IMR-90 (cell line): ENCODE measurements at regions of chr16 and their contacts with region 1.

Region 1: DNA sequence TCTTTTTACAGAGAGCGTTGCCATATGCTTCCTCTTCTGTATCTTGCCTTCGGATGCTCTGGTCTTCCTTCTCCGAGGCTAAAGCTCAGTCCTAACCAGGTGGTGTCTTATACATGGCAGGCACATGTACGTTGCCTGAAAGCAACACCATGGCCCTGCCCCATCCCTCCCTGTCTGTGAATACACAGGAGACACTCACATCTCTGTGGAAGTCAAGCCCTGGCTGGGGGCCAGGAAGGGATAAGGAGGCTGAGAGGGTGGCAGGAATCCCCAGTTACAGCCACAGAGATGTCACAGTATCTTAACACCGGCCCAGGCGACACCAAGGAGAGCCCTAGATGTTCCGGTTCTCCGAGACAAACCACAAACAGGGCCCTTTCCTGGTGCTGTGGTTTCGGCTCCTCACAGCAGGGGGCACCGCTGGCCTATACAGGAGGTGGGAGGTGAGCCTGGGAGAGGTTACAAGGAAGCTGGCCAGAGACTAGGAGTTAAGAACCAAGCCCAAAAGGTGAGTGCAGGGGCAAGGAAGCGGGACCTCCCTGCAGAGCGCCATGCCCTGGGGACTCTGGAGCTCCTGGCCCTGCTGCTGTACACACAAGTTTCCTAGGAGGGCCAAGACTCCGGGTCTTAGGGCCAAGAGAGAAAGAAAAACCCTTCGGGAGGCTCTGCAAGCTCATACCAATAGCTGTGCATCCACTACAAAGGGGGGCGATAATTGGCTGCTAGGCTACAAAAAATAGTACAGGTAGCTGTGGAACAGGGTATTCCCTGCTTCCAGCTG is 41.7 kb downstream of the SRL start:
- DNase-seq: peak; percentile 60
- ATAC-seq: peak; percentile 98
- H3K4me3 ChIP-seq: no peak overlapping the region
- H3K27ac ChIP-seq: no peak overlapping the region
- H3K4me1 ChIP-seq: peaks cover 7% of the 10 kb centered on the region
- H3K27me3 ChIP-seq: no peaks in the 10 kb centered on the region
- CTCF ChIP-seq: peak; percentile 87
- POLR2A ChIP-seq: no peak; the same call in 1 of the 2 replicates
- RAD21 ChIP-seq: peak; percentile 93

Region 2: DNA sequence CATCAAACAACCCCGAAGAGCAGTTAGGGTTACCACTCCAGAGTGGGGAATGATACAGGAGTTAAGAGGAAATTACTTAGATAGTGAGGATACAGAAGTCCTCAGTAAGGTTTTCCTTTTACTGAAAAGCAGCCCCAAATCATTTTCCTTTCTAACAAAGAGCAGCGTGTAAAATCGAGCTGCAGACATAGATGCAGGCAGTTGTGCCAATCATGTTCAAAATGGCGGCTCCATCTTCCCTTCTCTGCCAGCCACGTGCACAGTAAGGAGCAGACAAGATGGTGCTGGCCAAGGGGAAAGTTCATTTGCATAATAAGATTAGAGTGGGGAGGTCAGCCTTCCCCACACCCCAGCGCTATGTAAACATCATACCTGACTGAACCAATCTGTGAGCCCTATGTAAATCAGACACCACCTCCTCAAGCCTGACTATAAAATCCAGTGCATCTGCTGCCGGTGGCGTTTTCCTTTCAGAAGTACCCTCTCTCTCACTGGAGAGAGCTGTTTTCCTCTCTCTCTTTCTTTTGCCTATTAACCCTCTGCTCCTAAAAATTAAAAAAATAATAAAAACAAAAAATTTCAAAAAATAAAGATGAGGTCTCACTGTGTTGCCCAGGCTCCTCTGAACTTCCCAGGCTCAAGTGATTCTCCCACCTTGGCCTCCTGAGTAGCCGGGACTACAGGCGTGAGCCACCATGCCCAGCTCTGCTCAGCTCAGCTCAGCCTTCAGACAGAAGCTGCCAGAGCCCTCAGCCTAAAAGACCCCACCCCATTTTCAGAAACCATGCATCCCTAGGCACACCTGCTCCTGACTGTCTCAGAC is 44.3 kb after region 1 on chr16:
- CTCF ChIA-PET with region 1: no interaction called
- POLR2A ChIA-PET with region 1: no interaction called
- dilution Hi-C with region 1: no loop called
- in situ Hi-C with region 1: no loop called
- intact Hi-C with region 1: no loop called
- DNase-seq: peak; percentile 10
- ATAC-seq: no peak; the same call in 1 of the 2 replicates
- H3K4me3 ChIP-seq: no peak overlapping the region
- H3K27ac ChIP-seq: no peak overlapping the region
- H3K4me1 ChIP-seq: 0 out of 2 replicates have a peak, but pooled peaks cover 2% of the 10 kb centered on the region
- H3K27me3 ChIP-seq: no peaks in the 10 kb centered on the region; the same call in 1 of the 2 replicates
- CTCF ChIP-seq: no peak
- POLR2A ChIP-seq: no peak
- RAD21 ChIP-seq: no peak

Region 3: DNA sequence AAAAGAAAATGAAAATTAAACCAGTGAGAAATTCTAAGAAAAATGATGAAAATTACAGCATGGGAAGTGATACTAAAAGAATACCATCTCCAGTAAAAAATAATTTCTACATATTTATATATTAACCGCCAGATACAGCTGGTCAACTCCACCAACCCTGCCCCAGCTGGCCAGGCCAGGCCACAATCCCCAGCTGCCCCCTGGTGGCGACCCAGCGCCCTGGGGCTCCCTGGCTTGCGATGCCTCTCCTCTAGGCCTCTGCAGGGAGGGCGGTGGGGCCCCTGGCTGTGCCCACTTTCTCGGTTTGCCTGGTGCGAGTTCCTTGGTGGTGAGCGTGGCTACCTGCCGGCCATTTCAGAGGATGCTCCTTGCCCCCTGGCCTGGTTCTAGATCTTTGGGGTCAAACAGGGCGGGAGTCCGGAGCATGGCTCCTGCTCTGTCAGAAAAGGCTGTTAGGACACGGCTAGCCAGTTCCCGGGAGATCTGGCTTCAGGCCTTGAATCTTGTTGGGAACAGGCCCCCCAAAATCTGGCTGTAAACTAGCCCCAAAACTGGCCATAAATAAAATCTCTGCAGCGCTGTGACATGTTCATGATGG is 130.2 kb after region 1 on chr16:
- CTCF ChIA-PET with region 1: no interaction called
- POLR2A ChIA-PET with region 1: no interaction called
- dilution Hi-C with region 1: no loop called
- in situ Hi-C with region 1: loop called (anchors 5 kb)
- intact Hi-C with region 1: loop called (anchors 1 kb)
- DNase-seq: peak; percentile 63
- ATAC-seq: peak; percentile 79
- H3K4me3 ChIP-seq: no peak overlapping the region
- H3K27ac ChIP-seq: no peak overlapping the region
- H3K4me1 ChIP-seq: peaks cover 20% of the 10 kb centered on the region
- H3K27me3 ChIP-seq: no peaks in the 10 kb centered on the region
- CTCF ChIP-seq: peak; percentile 96
- POLR2A ChIP-seq: no peak
- RAD21 ChIP-seq: peak; percentile 97

Region 4: GRCh38 chr16:4415538-4416199 is 215.5 kb after region 1 on chr16:
- CTCF ChIA-PET with region 1: no interaction called
- POLR2A ChIA-PET with region 1: no interaction called
- dilution Hi-C with region 1: no loop called
- in situ Hi-C with region 1: no loop called
- intact Hi-C with region 1: no loop called
- DNase-seq: no peak
- ATAC-seq: peak; percentile 52
- H3K4me3 ChIP-seq: peak overlapping the region; percentile 79
- H3K27ac ChIP-seq: peak overlapping the region; percentile 65
- H3K4me1 ChIP-seq: peaks cover 11% of the 10 kb centered on the region
- H3K27me3 ChIP-seq: no peaks in the 10 kb centered on the region
- CTCF ChIP-seq: no peak
- POLR2A ChIP-seq: no peak
- RAD21 ChIP-seq: no peak

Region 5: DNA sequence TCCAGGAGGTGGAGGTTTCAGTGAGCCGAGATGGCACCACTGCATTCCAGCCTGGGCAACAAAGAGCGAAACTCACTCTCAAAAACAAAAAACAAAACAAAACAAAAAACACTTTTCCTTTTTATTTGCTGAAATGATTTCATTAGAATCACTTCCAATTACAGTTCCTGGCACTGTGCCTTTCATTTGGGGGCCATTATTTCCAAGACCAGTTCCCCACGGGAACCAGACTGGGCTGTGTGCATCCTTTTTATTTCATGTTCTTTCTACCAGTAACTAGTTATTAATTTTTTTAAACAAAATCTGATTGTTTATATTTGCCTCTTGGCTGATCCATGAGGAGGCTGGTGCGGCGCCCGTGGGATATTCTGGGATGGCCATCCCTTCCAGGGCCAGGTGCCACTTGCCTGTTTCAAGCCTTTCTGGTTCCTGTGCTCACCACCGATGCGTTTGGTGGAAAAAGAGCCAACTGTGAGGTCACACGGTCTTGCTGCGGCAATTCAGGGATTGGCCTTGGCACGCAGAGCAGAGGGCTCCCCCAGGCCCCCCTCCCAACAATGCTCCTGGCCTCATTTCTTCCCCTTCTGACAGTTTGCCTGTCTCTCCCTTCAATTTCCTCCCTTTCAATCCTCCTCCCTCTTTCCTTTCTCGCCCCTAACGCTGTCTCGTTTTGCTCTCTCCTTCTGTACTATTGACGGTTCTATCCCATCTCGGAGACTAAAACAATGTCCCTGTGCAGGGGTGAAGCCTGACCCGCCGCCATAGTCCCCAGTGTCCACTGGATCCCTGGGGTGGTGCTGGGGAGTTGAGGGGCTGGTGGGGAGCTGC is 401.1 kb after region 1 on chr16:
- CTCF ChIA-PET with region 1: no interaction called
- POLR2A ChIA-PET with region 1: no interaction called
- dilution Hi-C with region 1: no loop called
- in situ Hi-C with region 1: no loop called
- intact Hi-C with region 1: no loop called
- DNase-seq: peak; percentile 20
- ATAC-seq: peak; percentile 56
- H3K4me3 ChIP-seq: no peak overlapping the region
- H3K27ac ChIP-seq: no peak overlapping the region
- H3K4me1 ChIP-seq: no peaks in the 10 kb centered on the region
- H3K27me3 ChIP-seq: peaks cover 26% of the 10 kb centered on the region
- CTCF ChIP-seq: no peak
- POLR2A ChIP-seq: no peak
- RAD21 ChIP-seq: no peak